Naive thymus-derived CD4-positive, alpha-beta T cell (primary cell): ENCODE measurements at regions of chr5 and their contacts with region 1.

Region 1: DNA sequence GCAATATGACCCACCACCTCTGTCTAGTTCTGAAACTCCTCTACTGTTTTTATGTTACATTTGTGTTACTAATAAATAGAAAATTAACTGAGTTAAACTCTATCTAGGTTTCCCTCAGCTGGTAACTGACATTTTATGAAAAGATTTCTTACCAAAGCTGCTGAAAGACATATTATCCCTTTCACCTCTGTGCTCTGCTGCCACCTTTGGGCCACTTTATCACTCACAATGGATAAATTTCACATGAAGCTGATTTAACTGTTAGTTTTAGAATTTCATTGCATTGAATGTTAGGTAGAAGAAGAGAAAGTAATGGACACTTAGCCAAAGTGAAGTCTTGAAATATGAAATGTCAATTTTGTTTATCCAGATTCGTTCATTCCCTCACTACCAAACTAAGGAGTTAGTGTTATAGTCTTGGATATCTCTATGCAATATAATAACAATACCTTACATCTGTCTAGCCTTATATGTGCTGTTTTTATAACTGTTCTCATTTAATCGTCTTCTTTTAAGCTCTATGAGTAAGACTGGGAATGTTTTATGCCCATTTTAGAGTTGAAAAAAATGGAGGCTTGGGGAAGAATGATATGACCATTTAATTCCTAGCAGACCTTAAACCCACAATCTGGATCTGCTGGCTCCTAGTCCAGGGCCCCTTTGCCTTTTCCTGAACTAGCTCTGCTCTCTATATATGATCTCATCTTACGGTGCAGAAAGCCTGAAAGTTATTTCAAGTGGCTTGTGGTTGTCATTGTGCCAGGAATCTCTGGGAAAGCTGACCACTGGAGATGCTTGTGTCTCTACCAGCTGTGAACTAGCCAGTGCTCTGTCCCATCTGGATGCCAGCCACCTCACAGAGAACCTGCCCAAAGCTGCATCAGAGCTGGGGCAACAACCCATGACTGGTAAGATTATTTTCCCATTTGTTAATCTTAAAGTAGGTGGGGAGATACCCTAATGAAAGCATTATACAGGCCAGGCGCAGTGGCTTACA is 97.1 kb downstream of the GOLPH3 start:
- DNase-seq: peak in 6 of 9 donors; percentile 10 to 66 (median 57)
- ATAC-seq: no peak
- H3K4me3 ChIP-seq: no peak overlapping the region
- H3K4me3 Mint-ChIP-seq: no peak overlapping the region
- H3K27ac ChIP-seq: no peak overlapping the region
- H3K27ac Mint-ChIP-seq: no peak overlapping the region
- H3K4me1 ChIP-seq: no peaks in the 10 kb centered on the region
- H3K4me1 Mint-ChIP-seq: peaks cover 0 to 5% (median 0%) of the 10 kb centered on the region in 7 donors
- H3K27me3 ChIP-seq: no peaks in the 10 kb centered on the region
- H3K27me3 Mint-ChIP-seq: no peaks in the 10 kb centered on the region

Region 2: GRCh38 chr5:31581498-31582099 is 495.4 kb before region 1 on chr5:
- CTCF ChIA-PET with region 1: no interaction called
- POLR2A ChIA-PET with region 1: no interaction called
- intact Hi-C with region 1: loop called (anchors 1 kb)
- DNase-seq: peak in 6 of 9 donors; percentile 1 to 49 (median 34)
- ATAC-seq: peak; percentile 36
- H3K4me3 ChIP-seq: no peak overlapping the region
- H3K4me3 Mint-ChIP-seq: no peak overlapping the region
- H3K27ac ChIP-seq: no peak overlapping the region
- H3K27ac Mint-ChIP-seq: no peak overlapping the region
- H3K4me1 ChIP-seq: no peaks in the 10 kb centered on the region
- H3K4me1 Mint-ChIP-seq: no peaks in the 10 kb centered on the region
- H3K27me3 ChIP-seq: no peaks in the 10 kb centered on the region
- H3K27me3 Mint-ChIP-seq: peaks cover 10 to 31% (median 17%) of the 10 kb centered on the region in 5 donors

Region 3: GRCh38 chr5:31638748-31639418 is 438.1 kb before region 1 on chr5 and contains the start of gene PDZD2:
- CTCF ChIA-PET with region 1: no interaction called
- POLR2A ChIA-PET with region 1: no interaction called
- intact Hi-C with region 1: loop called in 1 of 2 experiments (anchors 5 kb)
- DNase-seq: peak; percentile 38 to 81 (median 60)
- ATAC-seq: peak; percentile 79
- H3K4me3 ChIP-seq: peak within 1 kb of the TSS; percentile 62
- H3K4me3 Mint-ChIP-seq: peak within 1 kb of the TSS in 9 of 10 donors; percentile 83 to 90 (median 89)
- H3K27ac ChIP-seq: peak within 1 kb of the TSS; percentile 20
- H3K27ac Mint-ChIP-seq: peak within 1 kb of the TSS in 8 of 9 donors; percentile 34 to 72 (median 55)
- H3K4me1 ChIP-seq: peaks cover 0 to 6% of the 10 kb centered on the region in 2 donors
- H3K4me1 Mint-ChIP-seq: peaks cover 0 to 20% (median 10%) of the 10 kb centered on the region in 7 donors
- H3K27me3 ChIP-seq: no peaks in the 10 kb centered on the region
- H3K27me3 Mint-ChIP-seq: peaks cover 0 to 28% (median 14%) of the 10 kb centered on the region in 5 donors
- total RNA-seq, gene PDZD2: 1.1 to 2.7 (median 1.9) TPM in 4 of 5 experiments, not detected in the other

Region 4: GRCh38 chr5:31854181-31855133 is 222.5 kb before region 1 on chr5:
- CTCF ChIA-PET with region 1: interaction called, 21 read pairs
- POLR2A ChIA-PET with region 1: no interaction called
- intact Hi-C with region 1: loop called in 1 of 2 experiments (anchors 1 kb)
- DNase-seq: peak in 4 of 9 donors; percentile 10 to 26 (median 24)
- ATAC-seq: peak; percentile 43
- H3K4me3 ChIP-seq: peak overlapping the region; percentile 63
- H3K4me3 Mint-ChIP-seq: peak overlapping the region; percentile 76 to 97 (median 88)
- H3K27ac ChIP-seq: peak overlapping the region; percentile 66
- H3K27ac Mint-ChIP-seq: peak overlapping the region in 8 of 9 donors; percentile 81 to 93 (median 85)
- H3K4me1 ChIP-seq: no peaks in the 10 kb centered on the region
- H3K4me1 Mint-ChIP-seq: peaks cover 9 to 44% (median 28%) of the 10 kb centered on the region in 7 donors
- H3K27me3 ChIP-seq: no peaks in the 10 kb centered on the region
- H3K27me3 Mint-ChIP-seq: peaks cover 0 to 45% (median 22%) of the 10 kb centered on the region in 5 donors

Region 5: GRCh38 chr5:31934156-31934555 is 142.8 kb before region 1 on chr5:
- CTCF ChIA-PET with region 1: no interaction called
- POLR2A ChIA-PET with region 1: no interaction called
- intact Hi-C with region 1: loop called (anchors 1 to 5 kb)
- DNase-seq: no peak
- ATAC-seq: no peak
- H3K4me3 ChIP-seq: no peak overlapping the region
- H3K4me3 Mint-ChIP-seq: no peak overlapping the region
- H3K27ac ChIP-seq: no peak overlapping the region
- H3K27ac Mint-ChIP-seq: no peak overlapping the region
- H3K4me1 ChIP-seq: no peaks in the 10 kb centered on the region
- H3K4me1 Mint-ChIP-seq: peaks cover 0 to 26% (median 15%) of the 10 kb centered on the region in 7 donors
- H3K27me3 ChIP-seq: no peaks in the 10 kb centered on the region
- H3K27me3 Mint-ChIP-seq: peaks cover 0 to 1% (median 0%) of the 10 kb centered on the region in 5 donors

Region 6: GRCh38 chr5:32092938-32093812 is 16.2 kb after region 1 on chr5:
- CTCF ChIA-PET with region 1: interaction called, 6 read pairs
- POLR2A ChIA-PET with region 1: no interaction called
- intact Hi-C with region 1: loop called in 1 of 2 experiments (anchors 1 kb)
- DNase-seq: peak; percentile 27 to 76 (median 65)
- ATAC-seq: peak; percentile 89
- H3K4me3 ChIP-seq: no peak overlapping the region
- H3K4me3 Mint-ChIP-seq: no peak overlapping the region
- H3K27ac ChIP-seq: no peak overlapping the region
- H3K27ac Mint-ChIP-seq: peak overlapping the region in 2 of 9 donors; percentile 60 to 71
- H3K4me1 ChIP-seq: no peaks in the 10 kb centered on the region
- H3K4me1 Mint-ChIP-seq: peaks cover 0 to 7% (median 4%) of the 10 kb centered on the region in 7 donors
- H3K27me3 ChIP-seq: no peaks in the 10 kb centered on the region
- H3K27me3 Mint-ChIP-seq: no peaks in the 10 kb centered on the region

Region 7: GRCh38 chr5:32115985-32116384 is 39.0 kb after region 1 on chr5:
- CTCF ChIA-PET with region 1: no interaction called
- POLR2A ChIA-PET with region 1: no interaction called
- intact Hi-C with region 1: no loop called
- DNase-seq: no peak
- ATAC-seq: no peak
- H3K4me3 ChIP-seq: no peak overlapping the region
- H3K4me3 Mint-ChIP-seq: no peak overlapping the region
- H3K27ac ChIP-seq: no peak overlapping the region
- H3K27ac Mint-ChIP-seq: peak overlapping the region in 7 of 9 donors; percentile 7 to 79 (median 35)
- H3K4me1 ChIP-seq: no peaks in the 10 kb centered on the region
- H3K4me1 Mint-ChIP-seq: peaks cover 9 to 26% (median 16%) of the 10 kb centered on the region in 7 donors
- H3K27me3 ChIP-seq: no peaks in the 10 kb centered on the region
- H3K27me3 Mint-ChIP-seq: no peaks in the 10 kb centered on the region